Testis (tissue), 5 donors: ENCODE measurements at regions of chr14 and their contacts with region 1.

Region 1: GRCh38 chr14:53539489-53540126 is 386.5 kb upstream of the DDHD1 start:
- DNase-seq: peak; percentile 84
- H3K4me3 ChIP-seq: no peak overlapping the region
- H3K27ac ChIP-seq: peak overlapping the region in 1 of 2 donors; percentile 9
- H3K4me1 ChIP-seq: peaks cover 12% of the 10 kb centered on the region
- H3K27me3 ChIP-seq: no peaks in the 10 kb centered on the region
- CTCF ChIP-seq: peak; percentile 58 to 79 (median 75)
- POLR2A ChIP-seq: no peak

Region 2: GRCh38 chr14:53470351-53471043 is 69.1 kb before region 1 on chr14:
- intact Hi-C with region 1: no loop called
- DNase-seq: no peak
- H3K4me3 ChIP-seq: no peak overlapping the region
- H3K27ac ChIP-seq: no peak overlapping the region
- H3K4me1 ChIP-seq: no peaks in the 10 kb centered on the region
- H3K27me3 ChIP-seq: no peaks in the 10 kb centered on the region
- CTCF ChIP-seq: no peak
- POLR2A ChIP-seq: no peak

Region 3: DNA sequence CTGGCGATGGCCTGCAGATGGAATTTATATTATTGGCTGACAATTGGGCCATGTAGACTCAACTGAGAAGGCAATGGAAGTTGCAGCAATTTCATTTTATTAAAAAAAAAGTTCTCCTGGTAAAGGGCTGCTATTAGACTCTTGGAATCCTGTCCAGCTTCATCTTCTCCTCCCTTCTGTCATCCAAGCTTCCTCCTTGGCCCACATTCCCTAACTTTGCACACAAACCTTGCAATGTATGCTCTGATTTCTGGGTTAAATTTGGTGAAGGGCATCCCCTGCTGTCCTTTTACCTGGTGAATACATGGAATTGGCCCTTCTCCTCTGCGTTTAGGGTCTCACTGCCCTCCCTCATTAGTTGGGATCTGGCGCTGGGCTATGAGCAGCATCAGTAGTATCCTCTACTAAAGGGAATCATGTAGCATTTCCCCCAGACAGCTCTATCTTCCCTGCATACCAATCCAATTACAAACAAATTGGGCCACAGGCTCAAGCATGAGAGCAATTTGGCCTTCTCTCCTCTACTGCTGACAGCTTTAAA is 80.2 kb after region 1 on chr14:
- intact Hi-C with region 1: no loop called
- DNase-seq: no peak
- H3K4me3 ChIP-seq: no peak overlapping the region
- H3K27ac ChIP-seq: no peak overlapping the region
- H3K4me1 ChIP-seq: no peaks in the 10 kb centered on the region
- H3K27me3 ChIP-seq: no peaks in the 10 kb centered on the region
- CTCF ChIP-seq: no peak
- POLR2A ChIP-seq: no peak

Region 4: GRCh38 chr14:53865711-53866110 is 326.1 kb after region 1 on chr14:
- intact Hi-C with region 1: no loop called
- DNase-seq: no peak
- H3K4me3 ChIP-seq: no peak overlapping the region
- H3K27ac ChIP-seq: no peak overlapping the region
- H3K4me1 ChIP-seq: no peaks in the 10 kb centered on the region
- H3K27me3 ChIP-seq: no peaks in the 10 kb centered on the region
- CTCF ChIP-seq: no peak
- POLR2A ChIP-seq: no peak

Region 5: GRCh38 chr14:53963320-53964227 is 424.0 kb after region 1 on chr14:
- intact Hi-C with region 1: no loop called
- DNase-seq: no peak
- H3K4me3 ChIP-seq: peak overlapping the region in 1 of 2 donors; percentile 27
- H3K27ac ChIP-seq: no peak overlapping the region
- H3K4me1 ChIP-seq: no peaks in the 10 kb centered on the region
- H3K27me3 ChIP-seq: no peaks in the 10 kb centered on the region
- CTCF ChIP-seq: peak in 1 of 3 experiments; percentile 45
- POLR2A ChIP-seq: no peak

Region 6: DNA sequence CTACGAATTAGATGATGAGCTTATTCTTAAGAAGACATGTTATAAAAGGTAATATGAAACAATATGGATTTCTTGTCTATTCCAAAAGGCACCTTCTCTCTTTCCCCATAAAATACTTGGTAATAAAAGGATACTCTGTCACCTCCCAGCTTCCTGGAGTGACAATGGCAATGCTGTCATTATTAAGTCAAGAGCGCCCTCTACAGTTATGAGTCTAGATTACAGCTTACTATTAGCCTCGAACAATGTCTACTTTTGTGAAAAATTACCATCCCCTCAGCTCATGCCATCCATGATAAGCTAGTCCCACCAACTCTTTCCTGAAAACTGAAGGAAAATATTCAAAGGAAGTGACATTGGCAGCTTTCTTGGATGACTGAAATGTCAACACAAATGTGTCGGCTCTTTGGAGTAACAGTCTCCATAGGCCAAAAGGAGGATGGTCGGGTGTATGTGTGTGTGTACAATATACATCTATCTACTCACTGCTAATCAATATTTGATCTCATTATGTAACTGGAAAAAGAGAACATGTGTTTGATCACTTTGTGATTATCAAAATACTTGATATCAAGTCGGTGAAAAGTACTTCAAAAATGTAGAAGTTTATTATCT is 808.5 kb after region 1 on chr14:
- intact Hi-C with region 1: loop called (anchors 10 kb)
- DNase-seq: no peak
- H3K4me3 ChIP-seq: no peak overlapping the region
- H3K27ac ChIP-seq: no peak overlapping the region
- H3K4me1 ChIP-seq: peaks cover 12% of the 10 kb centered on the region
- H3K27me3 ChIP-seq: no peaks in the 10 kb centered on the region
- CTCF ChIP-seq: peak; percentile 45 to 72 (median 65)
- POLR2A ChIP-seq: no peak